ENCODE measurements at regions of chr1 and their contacts with region 1.

Region 1: DNA sequence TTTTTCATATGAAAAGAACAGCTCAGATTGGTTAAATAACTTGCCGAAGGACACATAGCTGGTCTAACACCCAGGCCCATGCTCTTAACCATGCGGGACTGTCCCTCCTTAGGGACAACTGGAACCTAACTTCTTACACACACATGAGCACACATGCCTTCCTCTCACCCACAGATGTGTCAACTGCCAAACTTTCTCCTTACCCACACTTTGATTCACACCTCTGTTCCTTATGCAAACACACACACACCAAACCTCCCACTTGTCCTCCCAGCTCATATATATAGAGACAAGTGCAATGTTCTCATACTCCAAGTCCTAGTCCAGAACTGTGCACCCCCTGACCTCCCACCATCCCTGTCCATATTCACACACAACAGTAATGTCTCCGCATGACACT is 4.3 kb downstream of the RAB25 start:
- DNase-seq: no peak
- ATAC-seq: no peak
- H3K4me3 ChIP-seq: no peak overlapping the region
- H3K27ac ChIP-seq: no peak overlapping the region
- H3K4me1 ChIP-seq: no peaks in the 10 kb centered on the region; the same call in 2 of the 3 replicates
- CTCF ChIP-seq: no peak
- EP300 ChIP-seq: no peak
- POLR2A ChIP-seq: no peak
- RAD21 ChIP-seq: no peak

Region 2: GRCh38 chr1:155978325-155978972 is 86.8 kb before region 1 on chr1 and contains the start of gene ARHGEF2:
- CTCF ChIA-PET with region 1: interaction called, 13 read pairs
- POLR2A ChIA-PET with region 1: interaction called, 3 read pairs
- DNase-seq: peak; percentile 80 to 89
- ATAC-seq: peak; percentile 64 to 85
- H3K4me3 ChIP-seq: peak within 1 kb of the TSS; percentile 90
- H3K27ac ChIP-seq: peak within 1 kb of the TSS; percentile 98 to 99
- H3K4me1 ChIP-seq: peaks cover 76% of the 10 kb centered on the region
- CTCF ChIP-seq: peak; percentile 23; the same call in 2 of the 3 replicates
- EP300 ChIP-seq: no peak
- POLR2A ChIP-seq: peak; percentile 69
- RAD21 ChIP-seq: no peak
- polyA plus RNA-seq, gene ARHGEF2: 67.4 and 69.1 TPM in 2 replicates

Region 3: DNA sequence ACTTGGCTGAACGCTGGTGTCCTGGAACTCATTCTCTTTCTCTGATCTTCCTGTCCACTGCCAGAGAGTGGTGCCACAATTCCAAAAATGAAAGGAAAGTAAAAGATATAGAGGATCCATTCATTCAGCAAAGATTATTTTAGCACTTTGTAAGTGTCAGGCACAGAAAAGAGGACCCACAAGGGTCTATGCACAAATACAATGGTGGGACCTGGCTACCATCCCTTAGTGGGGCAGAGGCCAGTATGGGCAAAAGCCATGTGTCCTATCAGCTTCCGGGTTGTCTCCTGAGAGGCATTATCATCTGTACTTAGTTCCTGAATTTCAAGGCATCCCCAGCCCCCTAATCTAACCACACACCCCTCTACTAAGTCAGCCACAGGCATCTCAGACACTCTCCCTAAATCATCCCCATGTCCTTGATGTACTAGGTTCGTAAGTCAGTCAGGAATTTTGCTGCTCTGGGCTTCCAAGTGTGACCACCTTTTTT is 63.5 kb before region 1 on chr1:
- CTCF ChIA-PET with region 1: interaction called, 19 read pairs
- POLR2A ChIA-PET with region 1: no interaction called
- DNase-seq: no peak
- ATAC-seq: peak; percentile 14 to 36; a peak in 3 of 6 replicates
- H3K4me3 ChIP-seq: 0 out of 3 replicates have a peak overlapping the region, but pooled peaks have one; percentile 17
- H3K27ac ChIP-seq: peak overlapping the region; percentile 68 to 85
- H3K4me1 ChIP-seq: peaks cover 39% of the 10 kb centered on the region
- CTCF ChIP-seq: no peak
- EP300 ChIP-seq: no peak
- POLR2A ChIP-seq: no peak
- RAD21 ChIP-seq: peak; percentile 25 to 35; a peak in 2 of 5 replicates

Region 4: GRCh38 chr1:156025877-156026276 is 39.3 kb before region 1 on chr1:
- CTCF ChIA-PET with region 1: interaction called, 15 read pairs
- POLR2A ChIA-PET with region 1: no interaction called
- DNase-seq: peak; percentile 72 to 78
- ATAC-seq: peak; percentile 96 to 98
- H3K4me3 ChIP-seq: no peak overlapping the region
- H3K27ac ChIP-seq: 0 out of 6 replicates have a peak overlapping the region, but pooled peaks of 1 of the 2 experiments have one; percentile 23
- H3K4me1 ChIP-seq: peaks cover 6% of the 10 kb centered on the region; the same call in 2 of the 3 replicates
- CTCF ChIP-seq: peak; percentile 47
- EP300 ChIP-seq: no peak
- POLR2A ChIP-seq: no peak
- RAD21 ChIP-seq: peak; percentile 18 to 46; a peak in 2 of 5 replicates

Region 5: GRCh38 chr1:156076501-156077429 is 11.6 kb after region 1 on chr1:
- CTCF ChIA-PET with region 1: interaction called, 29 read pairs
- POLR2A ChIA-PET with region 1: interaction called, 3 read pairs
- DNase-seq: no peak
- ATAC-seq: no peak
- H3K4me3 ChIP-seq: no peak overlapping the region
- H3K27ac ChIP-seq: no peak overlapping the region
- H3K4me1 ChIP-seq: peaks cover 11% of the 10 kb centered on the region; the same call in 2 of the 3 replicates
- CTCF ChIP-seq: no peak
- EP300 ChIP-seq: no peak
- POLR2A ChIP-seq: no peak
- RAD21 ChIP-seq: no peak

Region 6: GRCh38 chr1:156104065-156104810 is 39.0 kb after region 1 on chr1:
- CTCF ChIA-PET with region 1: no interaction called
- POLR2A ChIA-PET with region 1: no interaction called
- DNase-seq: peak; percentile 85 to 87
- ATAC-seq: peak; percentile 46 to 66; a peak in 5 of 6 replicates
- H3K4me3 ChIP-seq: no peak overlapping the region
- H3K27ac ChIP-seq: peak overlapping the region; percentile 92 to 96
- H3K4me1 ChIP-seq: peaks cover 92% of the 10 kb centered on the region
- CTCF ChIP-seq: no peak
- EP300 ChIP-seq: no peak
- POLR2A ChIP-seq: no peak
- RAD21 ChIP-seq: no peak

Region 7: GRCh38 chr1:156319664-156320063 is 254.5 kb after region 1 on chr1:
- CTCF ChIA-PET with region 1: no interaction called
- POLR2A ChIA-PET with region 1: no interaction called
- DNase-seq: peak; percentile 33 to 35
- ATAC-seq: peak; percentile 34 to 53; a peak in 4 of 6 replicates
- H3K4me3 ChIP-seq: no peak overlapping the region
- H3K27ac ChIP-seq: no peak overlapping the region
- H3K4me1 ChIP-seq: no peaks in the 10 kb centered on the region
- CTCF ChIP-seq: peak; percentile 60
- EP300 ChIP-seq: no peak
- POLR2A ChIP-seq: no peak
- RAD21 ChIP-seq: peak; percentile 40 to 52; a peak in 3 of 5 replicates

Measured in A549 (cell line).